Activated T-helper 1 cell treated with anti-CD3 and anti-CD28 coated beads, Interleukin-12 subunit alpha, Interleukin-12 subunit beta, Interleukin-2, Interleukin-4 antibody, amounts not matched to agents 30 ng/mL and 10 ng/mL and 1 ng/mL, durations not matched to agents 14 hours and 24 hours and 36 hours (primary cell): ENCODE measurements at regions of chr16 and their contacts with region 1.

Region 1: GRCh38 chr16:81798311-81799137 is 19.4 kb downstream of the PLCG2 start:
- DNase-seq: peak; percentile 5
- H3K4me3 Mint-ChIP-seq: peak overlapping the region; percentile 45
- H3K27ac Mint-ChIP-seq: peak overlapping the region; percentile 85
- H3K4me1 Mint-ChIP-seq: peaks cover 30% of the 10 kb centered on the region
- H3K27me3 Mint-ChIP-seq: no peaks in the 10 kb centered on the region

Region 2: GRCh38 chr16:81778861-81779535 is 19.5 kb before region 1 on chr16 and contains the start of gene PLCG2:
- intact Hi-C with region 1: loop called (anchors 2 kb)
- DNase-seq: peak; percentile 77
- H3K4me3 Mint-ChIP-seq: peak within 1 kb of the TSS; percentile 87
- H3K27ac Mint-ChIP-seq: peak within 1 kb of the TSS; percentile 42
- H3K4me1 Mint-ChIP-seq: peaks cover 19% of the 10 kb centered on the region
- H3K27me3 Mint-ChIP-seq: peaks cover 39% of the 10 kb centered on the region
- total RNA-seq, gene PLCG2: 12.9 and 13.7 TPM in 2 replicates

Region 3: DNA sequence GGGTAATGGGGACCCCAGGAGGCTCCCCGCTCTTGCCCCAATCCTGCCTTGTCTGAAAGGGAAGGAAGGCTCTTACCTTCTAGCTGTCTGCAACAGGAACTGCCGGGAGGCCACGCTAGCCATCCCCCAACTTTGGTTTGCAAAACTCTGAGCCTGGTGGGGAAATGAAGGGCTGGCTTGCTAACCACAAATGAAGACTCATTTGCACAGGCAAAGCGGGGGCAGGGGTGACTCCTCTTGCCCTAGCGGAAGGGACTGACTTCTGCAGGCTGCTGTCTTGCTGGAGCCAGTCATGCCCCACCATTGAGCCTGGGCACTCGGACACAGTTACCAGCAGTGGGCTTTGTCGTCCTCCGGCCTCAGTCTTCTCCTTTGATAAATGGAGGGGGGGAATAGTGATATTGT is 33.2 kb after region 1 on chr16:
- intact Hi-C with region 1: loop called (anchors 5 kb)
- DNase-seq: peak; percentile 21
- H3K4me3 Mint-ChIP-seq: peak overlapping the region; percentile 30
- H3K27ac Mint-ChIP-seq: no peak overlapping the region
- H3K4me1 Mint-ChIP-seq: peaks cover 30% of the 10 kb centered on the region
- H3K27me3 Mint-ChIP-seq: peaks cover 16% of the 10 kb centered on the region

Region 4: DNA sequence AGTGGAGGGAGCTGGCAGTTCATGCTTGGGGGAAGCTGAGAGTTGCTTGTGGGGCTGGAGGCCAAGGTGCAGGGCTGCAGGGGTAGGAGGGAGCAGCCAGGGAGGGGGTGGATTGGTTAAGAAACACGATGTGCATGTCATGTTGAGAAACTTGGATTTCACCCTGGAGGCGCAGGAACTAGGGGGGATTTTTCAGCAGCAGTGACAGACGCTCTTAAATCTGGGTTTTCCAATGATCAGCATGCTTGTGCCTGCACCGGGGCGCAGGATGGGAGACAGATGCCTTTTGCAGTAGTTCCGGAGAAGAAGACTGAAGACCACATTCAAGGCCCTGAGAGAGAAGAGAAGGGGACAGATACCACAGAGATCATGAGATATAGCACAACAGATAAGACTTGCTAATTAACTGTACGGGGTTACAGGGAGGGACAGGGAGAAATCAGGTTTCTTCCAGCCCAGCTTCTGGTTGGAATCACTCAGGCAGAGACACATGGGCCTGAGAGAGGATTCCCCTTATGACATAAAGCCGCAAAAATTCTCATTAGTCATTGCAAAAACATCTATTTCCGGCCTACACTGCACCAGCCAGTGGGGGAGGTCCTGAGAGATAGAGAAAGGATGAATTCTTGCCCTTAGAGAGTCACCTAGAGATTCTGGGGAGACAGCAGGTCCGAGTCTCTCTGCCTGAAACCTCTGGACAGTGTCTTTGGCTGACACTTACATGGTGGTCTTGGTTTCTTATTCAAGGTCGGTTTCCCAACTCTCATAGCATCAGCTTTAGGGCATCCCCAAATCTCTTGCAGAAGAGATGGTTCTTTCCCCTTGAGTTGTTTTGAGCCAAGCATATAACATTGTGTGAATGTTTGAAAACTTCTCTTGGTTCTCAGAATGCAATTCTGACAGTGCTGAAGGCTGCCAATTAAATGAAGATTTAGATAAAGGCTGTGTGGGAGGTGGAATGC is 855.3 kb after region 1 on chr16:
- intact Hi-C with region 1: loop called (anchors 10 kb)
- DNase-seq: peak; percentile 63
- H3K4me3 Mint-ChIP-seq: peak overlapping the region; percentile 78
- H3K27ac Mint-ChIP-seq: peak overlapping the region; percentile 99
- H3K4me1 Mint-ChIP-seq: peaks cover 95% of the 10 kb centered on the region
- H3K27me3 Mint-ChIP-seq: no peaks in the 10 kb centered on the region